Left ventricle myocardium inferior (tissue), 1 donor: ENCODE measurements at regions of chr4 and their contacts with region 1.

Region 1: DNA sequence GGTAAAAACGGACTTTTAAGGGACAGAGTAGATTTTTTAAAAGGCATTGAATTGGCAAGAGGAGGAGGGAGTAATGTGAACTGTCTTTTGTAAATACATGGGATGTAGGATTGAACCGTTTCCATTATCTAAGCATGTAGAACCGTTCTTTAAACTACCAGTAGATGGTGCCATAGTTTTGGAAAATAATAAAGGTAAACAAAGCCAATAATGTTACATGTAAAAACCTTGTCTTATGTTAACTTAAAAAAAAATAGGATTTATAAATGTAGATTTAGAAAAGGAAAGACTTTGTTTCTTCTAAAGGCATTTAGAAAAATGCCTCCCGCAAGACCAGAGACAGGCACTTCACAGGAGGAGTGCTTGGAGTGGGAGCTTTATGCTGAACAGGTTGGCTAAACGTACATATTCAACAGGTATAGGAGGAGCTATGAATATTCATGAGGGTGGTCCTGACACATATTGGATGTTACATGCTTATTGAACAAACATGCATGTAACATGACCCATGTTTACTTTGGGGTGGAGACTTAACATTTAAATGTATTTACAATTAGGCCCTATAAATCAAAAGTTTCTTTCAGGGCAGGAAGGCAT is 45.5 kb upstream of the FAM241A start:
- DNase-seq: no peak
- H3K4me3 ChIP-seq: no peak overlapping the region
- H3K27ac ChIP-seq: no peak overlapping the region
- H3K4me1 ChIP-seq: peaks cover 10% of the 10 kb centered on the region
- H3K27me3 ChIP-seq: no peaks in the 10 kb centered on the region
- CTCF ChIP-seq: peak; percentile 80

Region 2: DNA sequence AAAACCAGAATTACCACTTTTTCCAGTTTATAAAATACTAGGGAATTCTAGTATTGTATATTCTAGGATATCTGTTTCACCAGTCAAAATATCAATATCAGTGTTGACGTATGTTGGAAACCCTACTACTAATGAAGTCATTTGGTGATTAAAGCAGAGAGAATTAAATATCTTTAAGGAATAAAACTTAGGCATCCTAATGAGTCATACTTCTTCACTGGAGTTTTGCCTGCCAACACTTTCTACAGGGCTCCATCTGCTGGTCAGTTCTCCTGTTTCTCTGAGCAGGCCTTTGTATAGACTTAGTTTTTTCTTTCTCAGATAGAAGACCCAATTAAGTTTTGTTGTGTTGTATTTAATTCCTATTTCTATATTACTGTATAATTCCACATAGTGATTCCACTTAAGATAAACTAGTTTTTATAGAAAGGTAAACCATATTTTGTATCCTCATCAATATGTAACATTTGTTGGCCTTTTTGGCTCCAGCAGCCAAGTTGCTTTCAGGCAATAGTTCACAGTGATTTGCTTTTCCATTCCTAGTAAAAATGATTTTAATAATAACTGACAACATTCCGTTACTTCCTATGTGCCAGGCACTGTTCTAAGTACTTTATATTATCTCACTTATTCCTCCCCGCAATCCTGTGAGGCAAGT is 135.3 kb after region 1 on chr4:
- intact Hi-C with region 1: loop called (anchors 2 kb)
- DNase-seq: no peak
- H3K4me3 ChIP-seq: no peak overlapping the region
- H3K27ac ChIP-seq: no peak overlapping the region
- H3K4me1 ChIP-seq: peaks cover 40% of the 10 kb centered on the region
- H3K27me3 ChIP-seq: no peaks in the 10 kb centered on the region
- CTCF ChIP-seq: peak; percentile 89

Region 3: DNA sequence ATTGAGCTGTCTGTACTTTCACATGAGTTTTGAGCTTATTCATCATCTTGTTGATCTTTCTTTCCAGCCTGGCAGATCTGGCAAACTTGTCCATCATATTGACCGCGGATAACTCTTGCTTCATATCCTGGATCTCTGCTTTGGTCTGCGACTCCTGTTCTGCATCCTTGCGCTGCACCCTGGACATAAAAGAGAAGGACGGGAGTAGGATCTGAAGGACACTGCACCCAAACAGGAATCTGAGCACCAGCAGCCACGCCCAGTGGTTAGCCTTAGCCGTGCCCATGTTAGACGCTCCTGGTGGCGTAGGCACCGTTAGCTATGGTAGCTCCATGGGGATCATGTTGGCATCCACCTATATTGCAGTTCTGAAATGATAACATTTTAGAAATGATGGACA is 593.7 kb after region 1 on chr4:
- intact Hi-C with region 1: no loop called
- DNase-seq: no peak
- H3K4me3 ChIP-seq: no peak overlapping the region
- H3K27ac ChIP-seq: no peak overlapping the region
- H3K4me1 ChIP-seq: no peaks in the 10 kb centered on the region
- H3K27me3 ChIP-seq: no peaks in the 10 kb centered on the region
- CTCF ChIP-seq: no peak